ENCODE measurements at regions of chrX and their contacts with region 1.

Region 1: DNA sequence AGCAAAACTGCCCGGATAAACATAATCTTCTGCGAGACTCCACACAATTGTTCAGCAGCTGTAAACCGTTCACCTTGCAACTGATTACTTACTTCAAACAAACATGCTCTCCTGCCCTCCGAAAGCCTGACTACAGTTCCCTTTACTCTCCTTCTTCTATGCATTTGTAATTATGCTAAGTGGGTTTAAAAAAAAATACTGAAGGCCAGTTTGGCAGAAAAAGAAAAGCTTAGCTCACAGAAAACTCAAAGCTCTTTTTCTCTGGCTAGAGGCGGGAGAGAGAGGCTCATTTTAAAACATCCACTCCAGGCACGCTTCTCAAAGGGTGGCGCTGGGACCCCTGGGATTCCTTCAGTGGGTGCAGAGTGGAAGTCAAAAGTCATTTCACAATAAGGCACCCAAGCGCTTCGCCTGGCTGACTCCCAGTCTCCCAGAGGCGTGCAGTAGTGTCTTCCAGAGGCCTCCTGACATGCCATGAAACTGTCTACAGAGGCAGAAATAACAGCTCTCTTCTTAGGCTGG is 1.9 kb downstream of the DHRSX start:
- DNase-seq: peak in 1 of 5 donors; percentile 61
- ATAC-seq: peak; percentile 55 to 63 (median 59)
- H3K4me3 ChIP-seq: peak overlapping the region in 9 of 12 donors; percentile 21 to 98 (median 79)
- H3K27ac ChIP-seq: peak overlapping the region; percentile 86 to 98 (median 91)
- H3K4me1 ChIP-seq: peaks cover 0 to 51% (median 29%) of the 10 kb centered on the region in 12 donors
- H3K27me3 ChIP-seq: no peaks in the 10 kb centered on the region
- CTCF ChIP-seq: no peak
- POLR2A ChIP-seq: no peak

Region 2: GRCh38 chrX:2325076-2325784 is 173.6 kb before region 1 on chrX:
- intact Hi-C with region 1: loop called in 1 of 10 experiments (anchors 5 kb)
- DNase-seq: peak; percentile 32 to 91 (median 64)
- ATAC-seq: peak; percentile 28 to 65 (median 49)
- H3K4me3 ChIP-seq: peak overlapping the region in 11 of 12 donors; percentile 10 to 58 (median 36)
- H3K27ac ChIP-seq: peak overlapping the region in 8 of 12 donors; percentile 1 to 84 (median 53)
- H3K4me1 ChIP-seq: peaks cover 0 to 14% (median 0%) of the 10 kb centered on the region in 12 donors
- H3K27me3 ChIP-seq: no peaks in the 10 kb centered on the region
- CTCF ChIP-seq: no peak
- POLR2A ChIP-seq: no peak

Region 3: GRCh38 chrX:2342874-2343273 is 156.0 kb before region 1 on chrX:
- intact Hi-C with region 1: loop called in 2 of 10 experiments (anchors 10 kb)
- DNase-seq: no peak
- ATAC-seq: peak in 2 of 4 donors; percentile 8 to 14
- H3K4me3 ChIP-seq: no peak overlapping the region
- H3K27ac ChIP-seq: peak overlapping the region; percentile 60 to 95 (median 81)
- H3K4me1 ChIP-seq: peaks cover 0 to 23% (median 8%) of the 10 kb centered on the region in 12 donors
- H3K27me3 ChIP-seq: no peaks in the 10 kb centered on the region
- CTCF ChIP-seq: no peak
- POLR2A ChIP-seq: no peak

Region 4: GRCh38 chrX:2595258-2595657 is 96.4 kb after region 1 on chrX:
- intact Hi-C with region 1: loop called in 1 of 10 experiments (anchors 10 kb)
- DNase-seq: no peak
- ATAC-seq: peak in 1 of 4 donors; percentile 20
- H3K4me3 ChIP-seq: no peak overlapping the region
- H3K27ac ChIP-seq: no peak overlapping the region
- H3K4me1 ChIP-seq: peaks cover 0 to 4% (median 0%) of the 10 kb centered on the region in 12 donors
- H3K27me3 ChIP-seq: no peaks in the 10 kb centered on the region
- CTCF ChIP-seq: no peak
- POLR2A ChIP-seq: no peak

Region 5: DNA sequence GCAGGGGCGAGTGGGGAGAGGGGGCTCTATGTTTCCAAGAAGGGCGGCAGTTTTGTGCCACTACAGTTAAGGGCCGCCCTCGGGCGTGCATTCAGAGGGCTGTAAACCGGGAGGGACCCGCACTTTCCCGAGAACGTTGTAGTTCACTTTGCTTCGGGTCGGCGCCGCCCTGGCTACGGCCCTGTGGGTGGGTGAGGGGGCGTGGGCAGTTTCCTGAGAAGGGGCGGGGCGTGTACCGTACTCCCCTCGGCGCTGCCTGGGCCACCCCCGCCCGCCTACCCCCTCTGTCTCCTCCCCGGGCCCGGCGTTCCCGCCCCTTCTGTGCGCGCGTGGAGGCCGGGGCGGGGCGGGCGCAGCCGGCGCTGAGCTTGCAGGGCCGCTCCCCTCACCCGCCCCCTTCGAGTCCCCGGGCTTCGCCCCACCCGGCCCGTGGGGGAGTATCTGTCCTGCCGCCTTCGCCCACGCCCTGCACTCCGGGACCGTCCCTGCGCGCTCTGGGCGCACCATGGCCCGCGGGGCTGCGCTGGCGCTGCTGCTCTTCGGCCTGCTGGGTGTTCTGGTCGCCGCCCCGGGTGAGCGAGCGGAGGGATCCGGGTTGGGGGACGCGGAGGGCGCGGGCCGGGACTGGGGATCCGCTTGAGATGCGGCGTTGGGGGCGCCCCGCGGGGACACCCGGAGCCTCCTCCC is 192.2 kb after region 1 on chrX and contains the start of gene CD99:
- intact Hi-C with region 1: loop called in 1 of 10 experiments (anchors 10 kb)
- DNase-seq: peak; percentile 93 to 97 (median 95)
- ATAC-seq: peak; percentile 89 to 98 (median 95)
- H3K4me3 ChIP-seq: peak within 1 kb of the TSS; percentile 72 to 100 (median 96)
- H3K27ac ChIP-seq: peak within 1 kb of the TSS; percentile 71 to 96 (median 91)
- H3K4me1 ChIP-seq: peaks cover 9 to 47% (median 35%) of the 10 kb centered on the region in 12 donors
- H3K27me3 ChIP-seq: no peaks in the 10 kb centered on the region
- CTCF ChIP-seq: no peak
- POLR2A ChIP-seq: peak in 1 of 2 donors; percentile 76
- total RNA-seq, gene CD99: 216 to 475 (median 264) TPM

Measured in heart left ventricle (tissue), 16 donors.